ENCODE measurements at regions of chr6 and their contacts with region 1.

Region 1: DNA sequence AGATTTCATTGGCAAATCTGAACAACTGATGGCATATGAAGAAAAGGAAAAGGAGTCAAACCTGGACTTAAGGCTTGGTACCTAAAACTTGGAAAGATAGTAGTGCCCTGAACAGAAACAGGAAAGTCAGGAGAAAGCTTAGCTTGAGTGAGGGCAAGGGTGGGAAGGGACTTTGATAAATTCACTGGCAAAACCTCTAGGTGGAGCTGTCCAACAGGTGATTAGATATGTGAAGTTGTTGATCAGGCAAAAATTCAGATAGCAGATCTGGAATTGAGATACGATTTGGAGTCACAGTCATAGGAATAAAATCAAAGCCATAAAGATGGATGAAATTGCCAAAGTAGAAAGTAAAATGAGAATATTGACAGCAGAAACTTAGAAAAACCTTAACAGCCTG is 16.1 kb upstream of the ZNF292 start:
- DNase-seq: no peak
- ATAC-seq: peak; percentile 69
- H3K4me3 Mint-ChIP-seq: no peak overlapping the region
- H3K27ac Mint-ChIP-seq: no peak overlapping the region
- H3K4me1 Mint-ChIP-seq: peaks cover 3% of the 10 kb centered on the region
- H3K27me3 Mint-ChIP-seq: peaks cover 4% of the 10 kb centered on the region
- CTCF ChIP-seq: peak; percentile 66

Region 2: DNA sequence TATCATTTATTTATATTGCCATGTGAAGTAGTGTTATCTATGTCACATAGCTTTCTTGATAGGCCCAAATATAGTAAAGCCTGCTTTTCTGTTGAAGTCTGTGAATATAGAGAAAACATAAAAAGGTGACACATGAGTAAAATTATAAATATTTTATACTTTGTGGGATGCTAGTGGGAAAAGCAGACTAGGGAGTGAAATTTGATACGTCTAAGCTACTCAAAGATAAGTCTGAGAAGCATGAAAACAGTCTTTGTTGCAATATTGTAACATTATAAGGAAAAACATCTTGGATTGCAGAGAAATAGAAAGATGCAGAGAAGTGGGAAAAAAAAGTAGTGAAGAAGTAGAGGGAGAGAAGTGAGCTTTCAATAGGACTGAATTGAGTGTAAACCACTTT is 91.6 kb after region 1 on chr6:
- CTCF ChIA-PET with region 1: interaction called, 12 read pairs
- POLR2A ChIA-PET with region 1: no interaction called
- intact Hi-C with region 1: no loop called
- DNase-seq: no peak
- ATAC-seq: no peak
- H3K4me3 Mint-ChIP-seq: no peak overlapping the region
- H3K27ac Mint-ChIP-seq: no peak overlapping the region
- H3K4me1 Mint-ChIP-seq: peaks cover 3% of the 10 kb centered on the region
- H3K27me3 Mint-ChIP-seq: no peaks in the 10 kb centered on the region
- CTCF ChIP-seq: no peak

Region 3: GRCh38 chr6:87237804-87238203 is 98.6 kb after region 1 on chr6:
- CTCF ChIA-PET with region 1: interaction called, 12 read pairs
- POLR2A ChIA-PET with region 1: no interaction called
- intact Hi-C with region 1: loop called (anchors 1 kb)
- DNase-seq: no peak
- ATAC-seq: peak; percentile 66
- H3K4me3 Mint-ChIP-seq: no peak overlapping the region
- H3K27ac Mint-ChIP-seq: no peak overlapping the region
- H3K4me1 Mint-ChIP-seq: peaks cover 3% of the 10 kb centered on the region
- H3K27me3 Mint-ChIP-seq: no peaks in the 10 kb centered on the region
- CTCF ChIP-seq: no peak

Region 4: DNA sequence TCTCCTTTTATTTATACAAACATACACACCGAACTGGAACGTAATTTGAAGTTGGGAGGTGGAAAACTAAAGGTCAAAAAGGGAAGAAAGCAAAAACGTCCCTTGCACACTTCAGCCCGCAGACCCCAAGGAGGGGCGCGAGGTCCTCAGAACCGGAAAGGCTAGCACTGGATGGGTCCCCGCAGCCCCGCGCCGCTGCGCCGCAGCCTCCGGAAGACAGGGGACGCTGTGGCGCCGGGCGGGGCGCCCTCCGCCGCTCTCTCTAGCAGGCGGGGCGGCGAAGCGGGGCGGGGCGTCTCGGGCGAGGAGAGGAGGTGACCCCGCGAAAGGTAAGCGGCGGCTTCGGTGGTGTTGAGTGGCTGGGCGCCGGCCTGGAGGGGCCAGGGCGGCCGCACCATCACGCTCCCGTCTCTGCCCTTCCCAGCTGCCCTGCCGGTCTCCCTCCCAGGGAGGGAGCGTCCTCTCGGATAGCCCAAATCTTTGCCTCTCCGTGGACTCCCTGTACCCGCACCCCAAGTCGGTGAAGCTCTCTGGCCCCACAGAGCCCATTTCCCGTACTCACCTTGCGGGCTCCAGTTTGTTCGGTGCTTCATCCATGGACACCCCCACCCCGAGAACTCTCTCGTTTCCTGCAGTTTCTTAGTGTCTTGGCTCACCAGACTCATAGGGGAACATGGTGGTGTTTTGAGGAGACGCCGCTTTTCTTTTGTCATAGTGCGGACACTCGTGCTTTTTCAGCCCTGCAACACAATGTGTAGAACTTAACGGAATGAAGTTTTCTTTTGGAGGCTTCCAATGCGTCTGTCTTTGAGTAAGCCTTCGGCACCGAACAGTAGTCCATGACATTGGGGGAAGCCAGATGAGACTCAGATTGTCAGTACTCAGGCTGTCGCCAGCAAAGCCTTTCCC is 183.3 kb after region 1 on chr6 and contains the start of gene SMIM8:
- CTCF ChIA-PET with region 1: no interaction called
- POLR2A ChIA-PET with region 1: no interaction called
- intact Hi-C with region 1: loop called (anchors 5 kb)
- DNase-seq: peak; percentile 89
- ATAC-seq: peak; percentile 100
- H3K4me3 Mint-ChIP-seq: peak within 1 kb of the TSS; percentile 98
- H3K27ac Mint-ChIP-seq: peak within 1 kb of the TSS; percentile 90
- H3K4me1 Mint-ChIP-seq: peaks cover 25% of the 10 kb centered on the region
- H3K27me3 Mint-ChIP-seq: no peaks in the 10 kb centered on the region
- CTCF ChIP-seq: peak; percentile 79
- total RNA-seq, gene SMIM8: 11.1 and 14.4 TPM in 2 replicates

Region 5: GRCh38 chr6:87393022-87393622 is 253.9 kb after region 1 on chr6:
- CTCF ChIA-PET with region 1: interaction called, 6 read pairs
- POLR2A ChIA-PET with region 1: no interaction called
- intact Hi-C with region 1: loop called (anchors 1 kb)
- DNase-seq: no peak
- ATAC-seq: peak; percentile 94
- H3K4me3 Mint-ChIP-seq: no peak overlapping the region
- H3K27ac Mint-ChIP-seq: no peak overlapping the region
- H3K4me1 Mint-ChIP-seq: peaks cover 5% of the 10 kb centered on the region
- H3K27me3 Mint-ChIP-seq: no peaks in the 10 kb centered on the region
- CTCF ChIP-seq: peak; percentile 53

Region 6: DNA sequence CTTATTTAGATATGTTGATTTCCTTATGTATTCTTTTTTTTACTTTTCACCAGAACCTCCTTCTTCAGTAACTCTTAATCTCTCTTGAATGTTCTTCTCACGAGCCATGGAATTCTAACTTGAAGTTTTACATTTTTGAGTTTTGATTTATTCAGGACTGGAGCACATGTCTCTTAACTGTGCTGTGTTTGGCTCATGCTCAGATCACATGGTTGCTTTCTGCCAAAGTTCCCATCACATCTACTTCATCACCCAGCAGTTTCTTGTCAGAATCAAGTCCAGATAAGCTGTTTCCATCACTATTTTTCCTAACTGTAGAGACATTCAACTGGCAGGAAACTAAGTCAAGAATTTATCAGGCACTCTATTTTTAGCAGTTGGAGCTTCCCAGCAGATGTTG is 365.2 kb after region 1 on chr6:
- CTCF ChIA-PET with region 1: interaction called, 4 read pairs
- POLR2A ChIA-PET with region 1: no interaction called
- intact Hi-C with region 1: loop called (anchors 5 kb)
- DNase-seq: no peak
- ATAC-seq: no peak
- H3K4me3 Mint-ChIP-seq: no peak overlapping the region
- H3K27ac Mint-ChIP-seq: no peak overlapping the region
- H3K4me1 Mint-ChIP-seq: no peaks in the 10 kb centered on the region
- H3K27me3 Mint-ChIP-seq: no peaks in the 10 kb centered on the region
- CTCF ChIP-seq: no peak

Region 7: DNA sequence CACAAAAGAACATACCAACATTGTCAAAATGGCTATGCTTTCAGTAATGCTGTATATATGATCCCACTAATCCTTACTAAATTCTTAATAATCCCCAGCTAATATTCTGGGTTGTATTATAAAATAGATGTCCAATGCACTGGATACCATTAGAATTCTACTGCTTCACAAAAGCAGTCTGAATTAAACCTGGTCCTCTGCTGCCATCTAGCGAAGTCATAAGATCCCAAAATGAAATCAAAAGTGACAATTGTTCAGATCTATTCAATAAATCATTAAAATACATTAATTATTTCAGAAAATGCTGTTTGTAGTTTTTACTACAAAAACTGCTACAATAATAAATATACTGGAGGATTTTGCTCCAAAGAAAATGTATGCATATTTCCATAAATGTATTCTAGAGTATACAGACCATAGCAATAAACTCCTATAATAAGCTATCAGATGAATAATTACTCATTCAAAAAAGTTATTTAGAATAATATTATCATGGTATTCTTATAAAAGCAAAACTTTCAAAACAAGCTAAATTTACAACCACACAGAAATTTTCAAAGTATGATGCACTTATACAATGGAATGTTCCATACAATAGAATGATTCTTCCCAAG is 1731.6 kb after region 1 on chr6:
- CTCF ChIA-PET with region 1: interaction called, 5 read pairs
- POLR2A ChIA-PET with region 1: no interaction called
- intact Hi-C with region 1: loop called (anchors 1 kb)
- DNase-seq: no peak
- ATAC-seq: peak; percentile 42
- H3K4me3 Mint-ChIP-seq: no peak overlapping the region
- H3K27ac Mint-ChIP-seq: no peak overlapping the region
- H3K4me1 Mint-ChIP-seq: peaks cover 10% of the 10 kb centered on the region
- H3K27me3 Mint-ChIP-seq: no peaks in the 10 kb centered on the region
- CTCF ChIP-seq: no peak